ENCODE measurements at regions of chr1 and their contacts with region 1.

Region 1: GRCh38 chr1:205658943-205659581 is 21.2 kb downstream of the SLC45A3 start:
- DNase-seq: peak; percentile 58 to 65 (median 63)
- H3K4me3 ChIP-seq: no peak overlapping the region
- H3K4me3 Mint-ChIP-seq: no peak overlapping the region
- H3K27ac ChIP-seq: no peak overlapping the region
- H3K27ac Mint-ChIP-seq: peak overlapping the region in 2 of 7 donors; percentile 41 to 71
- H3K4me1 ChIP-seq: no peaks in the 10 kb centered on the region
- H3K4me1 Mint-ChIP-seq: peaks cover 0 to 4% (median 2%) of the 10 kb centered on the region in 4 donors
- H3K27me3 ChIP-seq: no peaks in the 10 kb centered on the region
- H3K27me3 Mint-ChIP-seq: peaks cover 0 to 1% of the 10 kb centered on the region in 2 donors

Region 2: GRCh38 chr1:205536759-205537361 is 122.2 kb before region 1 on chr1:
- CTCF ChIA-PET with region 1: interaction called, 83 read pairs
- POLR2A ChIA-PET with region 1: no interaction called
- intact Hi-C with region 1: no loop called
- DNase-seq: no peak
- H3K4me3 ChIP-seq: no peak overlapping the region
- H3K4me3 Mint-ChIP-seq: no peak overlapping the region
- H3K27ac ChIP-seq: no peak overlapping the region
- H3K27ac Mint-ChIP-seq: peak overlapping the region in 1 of 7 donors; percentile 37
- H3K4me1 ChIP-seq: no peaks in the 10 kb centered on the region
- H3K4me1 Mint-ChIP-seq: peaks cover 0 to 5% (median 2%) of the 10 kb centered on the region in 4 donors
- H3K27me3 ChIP-seq: no peaks in the 10 kb centered on the region
- H3K27me3 Mint-ChIP-seq: peaks cover 1 to 18% of the 10 kb centered on the region in 2 donors

Region 3: DNA sequence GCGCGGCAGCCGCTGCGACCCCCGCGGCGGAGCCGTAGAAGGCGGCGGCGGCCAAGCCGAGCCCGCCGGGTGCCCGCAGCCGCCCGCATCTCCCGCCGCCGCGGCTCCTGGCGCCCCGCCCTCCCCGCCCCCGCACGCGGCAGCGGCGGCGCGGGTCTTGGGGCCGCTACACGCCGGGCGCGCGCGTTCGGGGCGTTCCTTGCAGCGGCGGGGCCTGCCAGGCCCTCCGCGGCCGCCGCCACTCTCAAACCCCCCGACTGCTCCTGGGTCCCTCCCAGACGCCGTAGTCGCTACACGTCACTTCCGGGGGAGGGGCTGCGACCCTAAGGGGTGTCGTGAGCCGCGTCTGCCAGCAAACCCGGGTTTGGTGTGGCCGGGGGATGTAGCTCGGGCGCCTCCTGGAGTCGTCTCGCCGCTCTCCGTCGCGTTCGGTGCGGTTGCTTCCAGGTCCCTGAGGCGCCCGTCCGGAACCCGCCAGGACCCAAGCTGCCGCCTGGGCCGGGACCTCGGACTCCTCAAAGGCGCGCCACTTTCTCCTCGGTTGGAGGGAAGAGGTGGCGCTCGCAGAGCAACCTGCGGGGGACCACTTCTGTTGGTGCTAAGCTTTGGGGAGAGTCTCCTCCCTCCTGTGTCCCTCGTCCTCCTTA is 27.2 kb before region 1 on chr1 and contains the start of gene ELK4:
- CTCF ChIA-PET with region 1: interaction called, 31 read pairs
- POLR2A ChIA-PET with region 1: interaction called, 30 read pairs
- intact Hi-C with region 1: loop called (anchors 1 kb)
- DNase-seq: peak; percentile 99
- H3K4me3 ChIP-seq: peak within 1 kb of the TSS; percentile 72 to 87
- H3K4me3 Mint-ChIP-seq: peak within 1 kb of the TSS; percentile 92 to 99 (median 96)
- H3K27ac ChIP-seq: peak within 1 kb of the TSS; percentile 83
- H3K27ac Mint-ChIP-seq: peak within 1 kb of the TSS; percentile 92 to 99 (median 98)
- H3K4me1 ChIP-seq: peaks cover 47% of the 10 kb centered on the region
- H3K4me1 Mint-ChIP-seq: peaks cover 23 to 50% (median 38%) of the 10 kb centered on the region in 4 donors
- H3K27me3 ChIP-seq: no peaks in the 10 kb centered on the region
- H3K27me3 Mint-ChIP-seq: no peaks in the 10 kb centered on the region
- total RNA-seq, gene ELK4: 166 to 194 TPM

Region 4: GRCh38 chr1:205680073-205680851 is 21.2 kb after region 1 on chr1 and contains the start of gene SLC45A3:
- CTCF ChIA-PET with region 1: interaction called, 38 read pairs
- POLR2A ChIA-PET with region 1: no interaction called
- intact Hi-C with region 1: no loop called
- DNase-seq: peak in 4 of 5 donors; percentile 13 to 17 (median 16)
- H3K4me3 ChIP-seq: peak within 1 kb of the TSS; percentile 17 to 24
- H3K4me3 Mint-ChIP-seq: peak within 1 kb of the TSS; percentile 71 to 86 (median 81)
- H3K27ac ChIP-seq: no peak within 1 kb of the TSS
- H3K27ac Mint-ChIP-seq: peak within 1 kb of the TSS in 1 of 7 donors; percentile 30
- H3K4me1 ChIP-seq: peaks cover 9% of the 10 kb centered on the region
- H3K4me1 Mint-ChIP-seq: peaks cover 8 to 16% (median 10%) of the 10 kb centered on the region in 4 donors
- H3K27me3 ChIP-seq: peaks cover 5% of the 10 kb centered on the region
- H3K27me3 Mint-ChIP-seq: peaks cover 5 to 16% of the 10 kb centered on the region in 2 donors
- total RNA-seq, gene SLC45A3: 0.09 to 0.19 TPM

Region 5: GRCh38 chr1:205775015-205775716 is 116.1 kb after region 1 on chr1 and contains the start of gene RAB29:
- CTCF ChIA-PET with region 1: interaction called, 25 read pairs
- POLR2A ChIA-PET with region 1: no interaction called
- intact Hi-C with region 1: no loop called
- DNase-seq: peak; percentile 88 to 94 (median 90)
- H3K4me3 ChIP-seq: peak within 1 kb of the TSS; percentile 59 to 77
- H3K4me3 Mint-ChIP-seq: peak within 1 kb of the TSS; percentile 91 to 100 (median 92)
- H3K27ac ChIP-seq: peak within 1 kb of the TSS; percentile 87
- H3K27ac Mint-ChIP-seq: peak within 1 kb of the TSS; percentile 92 to 98 (median 97)
- H3K4me1 ChIP-seq: peaks cover 43% of the 10 kb centered on the region
- H3K4me1 Mint-ChIP-seq: peaks cover 35 to 69% (median 48%) of the 10 kb centered on the region in 4 donors
- H3K27me3 ChIP-seq: no peaks in the 10 kb centered on the region
- H3K27me3 Mint-ChIP-seq: no peaks in the 10 kb centered on the region
- total RNA-seq, gene RAB29: 59.7 to 62.0 TPM

Region 6: DNA sequence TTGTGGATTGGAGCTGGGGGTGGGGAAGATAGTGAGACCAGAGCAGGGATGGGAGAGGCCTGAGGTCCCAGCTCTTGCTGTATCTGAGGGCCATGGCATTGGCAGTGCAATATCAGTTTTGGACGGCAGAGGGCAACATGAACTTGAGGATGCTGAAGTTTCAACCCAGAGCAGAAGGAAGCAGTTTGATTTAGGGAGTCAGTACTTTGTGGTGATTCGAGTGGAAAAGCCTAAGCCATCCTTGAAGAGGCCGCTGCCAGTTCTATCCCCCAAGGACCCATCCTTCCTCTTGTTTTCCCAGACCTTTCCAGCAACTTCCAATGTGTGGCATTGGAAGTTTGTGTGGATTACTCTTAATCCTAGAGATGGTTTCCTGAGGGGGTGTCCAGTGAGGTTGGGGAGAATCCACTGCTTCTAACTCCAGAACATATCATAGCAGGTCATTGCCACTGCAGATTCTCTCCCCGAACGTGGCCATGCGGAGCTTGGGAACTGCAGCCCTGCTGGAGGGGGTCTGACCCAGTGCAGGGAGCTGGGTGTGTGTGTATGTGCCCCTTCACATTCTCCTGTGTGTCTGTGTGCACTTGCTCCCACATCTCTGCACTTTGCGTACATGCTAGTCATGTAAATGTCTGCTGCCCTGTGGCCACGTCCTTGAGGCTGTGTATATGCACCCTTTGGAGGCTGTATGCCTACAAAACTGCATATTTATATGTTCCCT is 260.1 kb after region 1 on chr1:
- CTCF ChIA-PET with region 1: interaction called, 11 read pairs
- POLR2A ChIA-PET with region 1: no interaction called
- intact Hi-C with region 1: no loop called
- DNase-seq: peak; percentile 41 to 62 (median 51)
- H3K4me3 ChIP-seq: no peak overlapping the region
- H3K4me3 Mint-ChIP-seq: no peak overlapping the region
- H3K27ac ChIP-seq: no peak overlapping the region
- H3K27ac Mint-ChIP-seq: no peak overlapping the region
- H3K4me1 ChIP-seq: no peaks in the 10 kb centered on the region
- H3K4me1 Mint-ChIP-seq: peaks cover 0 to 1% (median 0%) of the 10 kb centered on the region in 4 donors
- H3K27me3 ChIP-seq: no peaks in the 10 kb centered on the region
- H3K27me3 Mint-ChIP-seq: peaks cover 0 to 5% of the 10 kb centered on the region in 2 donors

Measured in CD4-positive, alpha-beta memory T cell (primary cell).